Activated CD4-positive, alpha-beta T cell treated with anti-CD3 and anti-CD28 coated beads, Interleukin-2, amount 10 ng/mL, durations not matched to agents 24 days and 14 days (primary cell): ENCODE measurements at regions of chr4 and their contacts with region 1.

Region 1: GRCh38 chr4:169612871-169613859 is 782 bp upstream of the NEK1 start:
- DNase-seq: peak; percentile 91
- H3K4me3 Mint-ChIP-seq: peak overlapping the region; percentile 90
- H3K27ac Mint-ChIP-seq: peak overlapping the region; percentile 94
- H3K4me1 Mint-ChIP-seq: peaks cover 36% of the 10 kb centered on the region
- H3K27me3 Mint-ChIP-seq: no peaks in the 10 kb centered on the region

Region 2: DNA sequence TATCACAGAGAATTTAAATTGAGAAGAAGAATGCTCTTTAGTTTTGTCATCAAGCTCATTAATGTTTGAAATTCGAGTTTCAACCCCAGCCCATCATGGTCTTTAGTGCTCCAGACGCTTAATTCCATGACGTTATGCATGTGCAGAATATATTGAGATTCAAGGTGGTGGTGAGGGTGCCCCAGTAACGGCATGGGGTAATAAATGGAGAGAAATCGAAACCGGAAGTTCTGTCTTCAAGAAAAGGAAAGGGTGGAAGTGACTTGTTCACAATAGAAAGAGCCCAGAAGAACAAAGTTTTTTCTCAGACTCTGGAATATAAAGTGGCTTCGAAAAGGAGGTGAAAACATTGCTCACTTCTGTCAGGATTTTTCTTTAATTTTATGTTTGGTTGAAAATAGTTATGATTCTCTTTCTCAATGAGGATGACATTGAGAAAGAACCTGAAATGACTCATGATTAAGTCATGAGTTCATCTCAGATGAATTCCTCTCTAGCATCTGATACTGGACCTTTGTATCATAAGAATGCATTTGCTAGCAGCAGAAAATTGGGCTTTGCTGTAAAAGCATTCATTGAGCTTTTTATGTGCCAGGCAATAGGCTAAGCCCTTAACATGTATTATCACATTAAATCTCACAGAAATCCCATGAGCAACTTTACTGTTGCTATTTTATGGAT is 1132.1 kb before region 1 on chr4:
- intact Hi-C with region 1: loop called (anchors 2 kb)
- DNase-seq: peak; percentile 85
- H3K4me3 Mint-ChIP-seq: peak overlapping the region; percentile 98
- H3K27ac Mint-ChIP-seq: peak overlapping the region; percentile 99
- H3K4me1 Mint-ChIP-seq: peaks cover 60% of the 10 kb centered on the region
- H3K27me3 Mint-ChIP-seq: no peaks in the 10 kb centered on the region

Region 3: DNA sequence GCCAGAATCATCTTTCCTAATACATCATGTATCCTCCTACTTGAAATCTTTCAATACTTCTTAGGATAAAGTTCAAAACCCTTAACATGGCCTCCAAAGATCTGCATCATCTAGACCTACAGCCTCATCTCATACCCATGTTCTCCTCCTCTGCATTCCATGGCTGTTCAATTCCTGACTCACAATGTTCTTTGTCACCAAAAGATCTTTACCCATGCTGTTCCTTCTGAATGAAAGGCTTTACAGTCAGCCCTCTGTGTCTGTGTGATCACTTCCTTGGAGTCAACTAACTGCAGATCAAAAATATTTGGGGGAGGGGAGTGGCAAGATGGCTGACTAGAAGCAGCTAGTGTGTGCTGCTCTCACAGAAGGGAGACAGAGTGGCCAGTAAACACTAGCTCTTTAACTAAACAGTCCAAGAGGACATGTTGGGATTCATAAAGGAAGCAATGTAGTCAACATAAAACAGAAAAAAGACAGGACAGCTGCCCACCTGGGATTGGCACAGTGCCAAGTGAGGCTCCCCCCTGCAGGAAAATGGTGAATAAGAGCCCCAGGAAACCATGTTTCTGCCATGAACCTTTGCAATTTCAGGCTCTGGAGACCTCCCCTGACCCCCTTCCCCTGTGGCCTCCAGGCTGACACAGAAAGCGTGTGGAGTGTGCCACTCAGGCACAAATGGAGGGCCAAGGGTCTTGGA is 635.0 kb before region 1 on chr4:
- intact Hi-C with region 1: no loop called
- DNase-seq: no peak
- H3K4me3 Mint-ChIP-seq: no peak overlapping the region
- H3K27ac Mint-ChIP-seq: no peak overlapping the region
- H3K4me1 Mint-ChIP-seq: no peaks in the 10 kb centered on the region
- H3K27me3 Mint-ChIP-seq: no peaks in the 10 kb centered on the region

Region 4: DNA sequence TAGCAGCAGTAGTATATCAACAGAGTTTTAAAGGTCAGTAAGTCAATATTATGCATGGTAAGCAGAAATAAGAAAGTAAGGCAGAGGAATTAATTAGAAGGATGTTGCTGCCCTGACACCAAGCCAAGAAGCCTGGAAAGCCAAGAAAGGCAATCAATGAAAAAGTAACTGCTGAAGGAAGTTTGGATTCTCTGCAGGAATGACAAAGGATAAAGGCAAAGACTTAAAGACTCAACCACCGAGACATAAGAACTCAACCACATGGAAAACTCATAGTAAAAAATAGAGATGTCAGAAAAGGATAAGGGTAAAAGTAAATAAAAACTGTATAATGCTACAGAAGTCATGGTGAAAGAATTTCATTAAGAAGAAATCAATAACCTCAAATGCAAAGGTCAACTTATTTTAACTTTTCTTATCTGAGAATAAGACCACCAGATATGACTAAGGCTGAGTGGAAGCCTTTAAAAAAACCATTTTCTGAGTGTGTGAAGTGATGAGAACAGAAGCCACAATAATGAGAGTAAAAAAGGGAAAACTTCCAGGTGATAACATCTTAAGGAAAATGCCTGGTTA is 56.0 kb before region 1 on chr4:
- intact Hi-C with region 1: no loop called
- DNase-seq: no peak
- H3K4me3 Mint-ChIP-seq: no peak overlapping the region
- H3K27ac Mint-ChIP-seq: no peak overlapping the region
- H3K4me1 Mint-ChIP-seq: no peaks in the 10 kb centered on the region
- H3K27me3 Mint-ChIP-seq: no peaks in the 10 kb centered on the region

Region 5: GRCh38 chr4:169659716-169660670 is 46.8 kb after region 1 on chr4:
- intact Hi-C with region 1: loop called (anchors 2 kb)
- DNase-seq: peak; percentile 92
- H3K4me3 Mint-ChIP-seq: peak overlapping the region; percentile 88
- H3K27ac Mint-ChIP-seq: peak overlapping the region; percentile 96
- H3K4me1 Mint-ChIP-seq: peaks cover 16% of the 10 kb centered on the region
- H3K27me3 Mint-ChIP-seq: no peaks in the 10 kb centered on the region

Region 6: DNA sequence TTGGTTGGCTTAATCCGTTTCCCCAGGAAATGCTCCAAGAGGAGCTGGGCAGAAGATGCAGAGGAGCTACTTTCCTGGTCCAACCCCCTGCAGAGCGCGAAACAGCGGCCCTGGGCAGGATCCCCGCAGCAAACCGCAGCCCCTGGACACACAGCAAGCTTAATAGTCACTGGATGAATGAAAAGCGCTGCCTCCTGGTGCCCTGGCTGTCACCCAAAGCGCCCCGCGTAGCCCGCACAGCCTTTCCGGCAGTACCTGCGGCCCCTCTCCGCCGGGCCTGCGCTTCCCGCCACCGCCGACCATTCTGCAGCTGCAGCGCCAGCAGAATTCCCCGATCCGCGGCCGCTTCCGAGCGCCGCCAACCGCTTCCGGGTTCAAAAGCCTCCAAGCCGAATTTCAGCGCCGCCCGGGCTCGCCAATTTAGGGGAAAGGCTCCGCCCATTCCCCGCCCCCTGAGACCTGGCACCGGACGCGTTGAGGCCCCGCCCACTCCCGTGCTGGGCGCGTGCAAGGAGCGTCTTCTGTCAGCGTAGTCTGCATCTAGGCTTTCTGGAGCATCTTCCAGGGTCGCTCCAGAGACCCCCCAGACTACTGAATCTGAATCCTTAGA is 144.5 kb after region 1 on chr4 and contains the start of gene HPF1:
- intact Hi-C with region 1: loop called (anchors 2 kb)
- DNase-seq: peak; percentile 98
- H3K4me3 Mint-ChIP-seq: peak within 1 kb of the TSS; percentile 89
- H3K27ac Mint-ChIP-seq: peak within 1 kb of the TSS; percentile 36
- H3K4me1 Mint-ChIP-seq: peaks cover 20% of the 10 kb centered on the region
- H3K27me3 Mint-ChIP-seq: peaks cover 10% of the 10 kb centered on the region
- total RNA-seq, gene HPF1: 18.8 and 34.0 TPM in 2 replicates

Region 7: DNA sequence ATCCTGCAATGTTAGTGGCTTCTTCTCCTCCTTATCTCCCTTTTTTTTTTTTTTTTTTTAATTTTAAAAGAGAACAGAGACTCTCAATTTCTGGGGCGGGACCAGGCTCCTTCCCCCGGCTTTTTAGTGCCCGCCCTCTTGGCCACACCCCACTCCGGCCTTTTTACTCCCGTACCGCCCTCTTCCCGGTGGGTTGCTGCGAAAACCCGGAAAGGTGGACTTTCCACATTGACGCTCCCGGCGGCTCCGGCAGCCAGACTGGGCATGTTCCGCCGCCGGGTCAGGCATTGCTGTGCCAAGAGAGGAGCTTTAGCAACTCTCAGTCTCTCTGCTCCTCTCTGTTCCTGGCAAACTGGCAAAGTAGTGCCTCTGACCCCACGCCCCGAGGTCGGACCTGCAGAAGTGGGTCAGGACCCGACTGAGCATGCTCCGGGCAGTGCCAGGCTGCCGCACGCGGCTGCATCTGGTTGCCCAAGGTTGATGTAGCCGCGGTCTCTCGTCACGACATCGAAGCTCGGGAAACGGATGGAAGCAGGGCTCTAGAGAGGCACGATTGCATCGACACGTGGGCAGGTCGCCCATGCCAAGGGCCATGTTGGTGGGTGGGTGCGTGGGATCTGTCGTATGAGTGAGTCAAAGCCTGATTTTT is 414.1 kb after region 1 on chr4:
- intact Hi-C with region 1: loop called (anchors 1 kb)
- DNase-seq: peak; percentile 96
- H3K4me3 Mint-ChIP-seq: peak overlapping the region; percentile 89
- H3K27ac Mint-ChIP-seq: peak overlapping the region; percentile 76
- H3K4me1 Mint-ChIP-seq: peaks cover 10% of the 10 kb centered on the region
- H3K27me3 Mint-ChIP-seq: peaks cover 67% of the 10 kb centered on the region

Region 8: DNA sequence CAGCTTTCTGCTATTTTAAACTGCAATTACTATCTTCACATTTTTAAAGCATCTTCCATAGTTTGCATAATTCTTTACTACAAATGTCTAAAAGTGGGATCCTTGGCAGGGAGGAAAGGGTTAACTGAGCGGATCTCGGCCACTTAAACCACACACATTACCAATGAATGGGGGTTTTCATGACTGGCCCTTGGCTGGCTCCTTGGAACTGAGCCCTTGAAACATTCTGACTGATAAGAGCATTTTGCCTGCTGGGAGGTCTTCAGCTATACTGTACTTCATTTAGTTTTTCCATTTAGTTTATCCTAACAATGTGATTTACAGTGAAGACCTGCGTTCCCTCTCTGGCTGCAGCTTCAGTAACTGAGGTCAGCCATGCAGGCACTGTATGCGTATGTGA is 444.7 kb after region 1 on chr4:
- intact Hi-C with region 1: no loop called
- DNase-seq: no peak
- H3K4me3 Mint-ChIP-seq: no peak overlapping the region
- H3K27ac Mint-ChIP-seq: no peak overlapping the region
- H3K4me1 Mint-ChIP-seq: no peaks in the 10 kb centered on the region
- H3K27me3 Mint-ChIP-seq: peaks cover 3% of the 10 kb centered on the region